Dorsolateral prefrontal cortex (tissue), 120 donors: ENCODE measurements at regions of chr7 and their contacts with region 1.

Region 1: GRCh38 chr7:2214636-2215035 is 18.1 kb downstream of the MAD1L1 start:
- DNase-seq: no peak
- H3K4me3 ChIP-seq: no peak overlapping the region
- H3K27ac ChIP-seq: no peak overlapping the region
- H3K27me3 ChIP-seq: no peaks in the 10 kb centered on the region
- CTCF ChIP-seq: no peak

Region 2: DNA sequence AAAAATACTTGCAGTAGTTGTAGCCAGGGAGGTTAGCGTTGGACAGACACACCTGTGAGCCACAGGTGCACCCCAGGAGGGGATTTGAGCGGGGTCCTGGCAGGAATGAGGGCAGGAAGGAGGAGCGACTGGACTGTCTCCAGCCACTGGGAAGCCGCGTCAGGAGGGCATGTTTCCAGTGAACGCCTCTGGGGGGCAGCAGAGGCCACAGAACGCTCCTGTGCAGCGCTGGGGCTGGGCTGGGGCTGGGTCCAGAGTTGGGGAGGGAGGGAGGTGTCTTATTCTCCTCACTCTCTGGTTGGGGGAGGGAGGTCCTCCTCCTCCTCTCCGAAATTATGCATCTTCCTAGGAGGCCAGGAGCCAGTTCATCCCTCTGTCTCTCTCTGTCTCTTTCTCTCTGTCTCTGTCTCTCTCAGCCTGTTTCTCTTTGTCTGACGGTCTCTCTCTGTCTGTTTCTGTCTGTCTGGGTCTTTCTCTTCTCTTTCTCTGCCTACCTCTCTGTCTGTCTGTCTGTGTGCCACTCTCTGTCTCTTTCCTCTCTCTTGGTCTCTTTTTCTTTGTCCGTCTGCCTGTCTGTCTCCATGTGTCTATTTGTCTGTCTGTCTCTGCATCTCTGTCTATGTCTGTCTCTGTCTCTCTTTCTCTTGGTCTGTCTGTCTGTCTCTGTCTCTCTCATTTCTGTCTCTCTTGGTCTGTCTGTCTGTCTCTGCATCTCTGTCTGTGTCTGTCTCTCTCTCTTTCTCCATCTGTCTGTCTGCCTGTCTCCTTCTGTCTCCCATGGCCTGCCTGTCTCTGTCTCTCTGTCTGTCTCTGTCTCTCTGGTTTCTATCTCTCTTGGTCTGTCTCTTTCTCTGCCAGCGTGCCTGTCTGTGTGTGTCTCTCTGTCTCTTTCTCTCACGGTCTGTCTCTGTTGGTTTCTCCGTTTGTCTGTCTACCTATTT is 634.9 kb before region 1 on chr7:
- intact Hi-C with region 1: loop called (anchors 5 to 10 kb)
- DNase-seq: peak in 9 of 10 donors; percentile 62 to 85 (median 75)
- H3K4me3 ChIP-seq: peak overlapping the region in 2 of 59 donors; percentile 12 to 14
- H3K27ac ChIP-seq: no peak overlapping the region
- H3K27me3 ChIP-seq: no peaks in the 10 kb centered on the region
- CTCF ChIP-seq: peak in 55 of 56 donors; percentile 36 to 89 (median 81)

Region 3: DNA sequence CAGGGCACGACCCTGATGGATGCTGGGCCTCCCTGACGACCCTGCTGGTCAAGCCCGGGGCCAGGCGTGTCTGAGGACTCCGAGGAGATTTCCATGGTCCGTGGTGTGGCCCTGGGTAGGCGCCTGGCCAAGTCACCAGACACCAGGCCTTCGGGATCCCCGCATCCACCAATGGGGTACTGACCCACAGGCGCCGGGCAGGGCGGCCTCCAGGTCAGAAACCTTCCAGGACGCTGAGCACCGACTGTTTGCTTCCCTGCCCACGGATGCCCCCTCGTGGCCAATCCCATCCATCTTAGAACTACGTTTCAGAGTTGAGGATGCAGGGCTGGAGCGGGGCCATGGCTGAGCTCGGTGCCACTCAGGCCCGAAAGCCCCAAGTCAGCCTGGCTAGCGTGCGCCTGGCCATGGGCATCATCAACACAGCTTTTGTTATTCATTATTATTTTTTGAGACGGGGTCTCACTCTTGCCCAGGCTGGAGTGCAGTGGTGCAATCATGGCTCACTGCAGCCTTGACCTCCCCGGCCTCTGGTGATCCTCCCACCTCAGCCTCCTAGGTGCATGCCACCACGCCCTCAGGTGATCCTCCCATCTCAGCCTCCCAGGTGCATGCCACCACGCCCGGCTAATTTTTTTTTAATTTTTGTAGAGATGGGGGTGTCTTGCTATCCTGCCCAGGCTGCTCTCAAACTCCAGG is 466.3 kb after region 1 on chr7:
- intact Hi-C with region 1: no loop called
- DNase-seq: peak; percentile 80 to 90 (median 88)
- H3K4me3 ChIP-seq: peak overlapping the region in 13 of 59 donors; percentile 3 to 57 (median 42)
- H3K27ac ChIP-seq: peak overlapping the region in 55 of 59 donors; percentile 44 to 95 (median 90)
- H3K27me3 ChIP-seq: peaks cover 0 to 2% (median 0%) of the 10 kb centered on the region in 45 donors
- CTCF ChIP-seq: peak; percentile 56 to 92 (median 82)